Activated naive CD4-positive, alpha-beta T cell treated with anti-CD3 and anti-CD28 coated beads for 36 hours (primary cell): ENCODE measurements at regions of chr1 and their contacts with region 1.

Region 1: GRCh38 chr1:160006312-160006940 is 25.4 kb downstream of the PIGM start:
- DNase-seq: peak; percentile 84
- H3K4me3 Mint-ChIP-seq: no peak overlapping the region
- H3K27ac Mint-ChIP-seq: no peak overlapping the region
- H3K4me1 Mint-ChIP-seq: no peaks in the 10 kb centered on the region
- H3K27me3 Mint-ChIP-seq: no peaks in the 10 kb centered on the region

Region 2: GRCh38 chr1:159798893-159799292 is 207.5 kb before region 1 on chr1:
- CTCF ChIA-PET with region 1: interaction called, 29 read pairs
- intact Hi-C with region 1: loop called (anchors 1 kb)
- DNase-seq: peak; percentile 71
- H3K4me3 Mint-ChIP-seq: no peak overlapping the region
- H3K27ac Mint-ChIP-seq: no peak overlapping the region
- H3K4me1 Mint-ChIP-seq: peaks cover 13% of the 10 kb centered on the region
- H3K27me3 Mint-ChIP-seq: no peaks in the 10 kb centered on the region

Region 3: DNA sequence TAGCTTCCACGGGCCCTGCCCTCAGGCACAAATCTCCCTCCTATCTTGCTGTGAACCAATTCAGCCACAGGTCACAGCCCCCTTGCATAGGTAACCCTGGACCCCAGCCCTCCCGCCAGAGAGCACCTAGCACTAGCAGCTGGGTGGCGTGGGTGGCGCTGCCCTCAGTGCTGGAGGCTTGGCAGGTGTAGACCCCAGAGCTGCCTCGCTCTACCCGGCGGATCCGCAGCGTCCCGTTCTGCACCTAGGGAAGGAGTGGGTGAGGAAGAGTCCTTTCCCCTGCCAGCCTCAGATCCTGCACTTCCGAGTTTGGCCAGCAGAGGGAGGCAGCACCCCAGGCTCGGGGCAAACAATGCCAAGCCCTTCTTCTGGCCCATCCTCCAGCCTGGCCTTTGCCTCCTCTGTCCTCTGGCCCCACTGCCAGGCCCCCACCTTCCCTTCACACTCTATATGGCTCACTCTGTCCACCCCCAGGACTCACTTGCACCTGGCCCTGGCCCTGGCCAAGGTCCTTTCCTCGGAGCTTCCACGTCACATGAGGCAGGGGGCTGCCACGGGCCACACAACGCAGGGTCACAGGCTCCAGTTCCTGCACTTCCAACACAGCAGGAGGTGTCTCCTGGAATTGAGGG is 70.0 kb before region 1 on chr1:
- CTCF ChIA-PET with region 1: interaction called, 228 read pairs
- intact Hi-C with region 1: loop called (anchors 1 kb)
- DNase-seq: peak; percentile 89
- H3K4me3 Mint-ChIP-seq: no peak overlapping the region
- H3K27ac Mint-ChIP-seq: no peak overlapping the region
- H3K4me1 Mint-ChIP-seq: no peaks in the 10 kb centered on the region
- H3K27me3 Mint-ChIP-seq: no peaks in the 10 kb centered on the region

Region 4: DNA sequence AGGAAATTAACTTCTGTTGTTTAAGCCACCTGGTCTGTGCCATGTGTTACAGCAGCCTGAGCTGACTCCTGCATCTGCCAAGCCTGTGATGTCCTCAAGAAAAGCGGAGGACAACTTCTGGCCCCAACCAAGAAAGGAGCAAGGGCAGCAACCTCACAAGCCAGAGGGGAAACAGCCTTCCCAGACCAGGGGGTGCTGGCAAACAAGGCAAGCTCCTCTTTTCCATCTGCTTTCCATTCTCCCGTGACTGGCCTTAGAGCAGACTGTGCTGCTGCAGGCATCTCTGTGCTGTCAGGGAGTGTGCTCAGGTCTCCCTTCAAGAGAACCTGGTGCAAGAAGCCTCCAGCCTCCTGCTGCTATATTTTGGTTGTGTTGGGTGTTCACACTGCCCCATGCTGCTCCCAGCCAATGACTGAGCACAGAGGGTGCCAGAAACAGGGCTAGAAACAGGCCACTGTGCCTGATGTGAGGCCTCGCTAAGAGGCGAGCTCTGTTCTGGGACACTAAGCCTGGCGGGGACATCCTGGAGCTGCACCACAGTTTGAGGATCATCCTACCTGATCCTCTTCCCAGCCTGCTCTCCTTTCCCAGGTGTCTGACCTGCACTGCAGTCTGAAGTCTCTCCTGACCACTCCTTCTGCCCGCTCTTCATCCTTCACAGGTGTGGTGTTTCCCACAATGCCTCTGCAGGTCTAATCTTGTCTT is 24.9 kb before region 1 on chr1:
- CTCF ChIA-PET with region 1: interaction called, 18 read pairs
- intact Hi-C with region 1: no loop called
- DNase-seq: no peak
- H3K4me3 Mint-ChIP-seq: no peak overlapping the region
- H3K27ac Mint-ChIP-seq: no peak overlapping the region
- H3K4me1 Mint-ChIP-seq: no peaks in the 10 kb centered on the region
- H3K27me3 Mint-ChIP-seq: no peaks in the 10 kb centered on the region

Region 5: DNA sequence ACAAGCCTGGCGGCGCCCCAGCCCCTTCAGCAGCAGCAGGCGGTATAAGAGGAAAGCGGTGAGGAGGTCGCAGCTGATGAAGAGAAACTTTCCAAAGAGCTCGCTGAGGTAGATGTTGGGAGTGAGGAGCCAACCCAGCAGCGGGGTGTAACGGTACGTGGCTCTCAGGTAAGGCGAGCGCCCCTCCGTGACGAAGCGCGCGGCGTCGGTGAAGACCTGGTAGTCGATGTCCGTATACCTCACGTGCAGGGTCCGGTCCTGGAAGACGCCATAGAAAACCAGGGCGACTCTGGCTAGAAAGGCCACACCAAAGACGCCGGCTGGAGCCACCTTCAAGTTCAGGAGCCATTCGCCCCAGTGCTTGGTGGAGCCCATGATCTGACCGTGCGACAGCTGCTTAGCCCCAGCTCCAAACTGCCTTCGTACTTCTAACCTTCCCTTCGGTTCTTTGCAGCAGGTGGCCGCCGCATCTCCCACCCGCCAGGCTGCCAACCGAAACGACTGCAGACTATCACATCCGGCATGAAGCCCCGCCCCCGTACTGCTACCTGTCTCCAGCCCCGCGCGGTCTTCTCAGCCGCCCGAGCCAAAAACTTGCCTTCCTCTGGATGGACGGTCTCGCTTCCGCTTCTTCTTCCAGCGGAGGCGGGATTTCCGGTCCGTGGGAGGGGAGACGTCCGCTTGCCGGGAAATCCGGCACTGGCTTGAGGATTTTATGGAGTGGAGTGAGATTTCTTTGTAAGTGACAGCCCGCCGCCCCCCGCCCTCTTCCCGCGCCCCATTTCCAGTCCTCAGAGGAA is 25.1 kb after region 1 on chr1 and contains the start of gene PIGM:
- CTCF ChIA-PET with region 1: interaction called, 36 read pairs
- intact Hi-C with region 1: no loop called
- DNase-seq: peak; percentile 98
- H3K4me3 Mint-ChIP-seq: peak within 1 kb of the TSS; percentile 93
- H3K27ac Mint-ChIP-seq: peak within 1 kb of the TSS; percentile 87
- H3K4me1 Mint-ChIP-seq: peaks cover 25% of the 10 kb centered on the region
- H3K27me3 Mint-ChIP-seq: no peaks in the 10 kb centered on the region
- total RNA-seq, gene PIGM: 2.6 TPM